Heart left ventricle (tissue), 16 donors: ENCODE measurements at regions of chr22 and their contacts with region 1.

Region 1: DNA sequence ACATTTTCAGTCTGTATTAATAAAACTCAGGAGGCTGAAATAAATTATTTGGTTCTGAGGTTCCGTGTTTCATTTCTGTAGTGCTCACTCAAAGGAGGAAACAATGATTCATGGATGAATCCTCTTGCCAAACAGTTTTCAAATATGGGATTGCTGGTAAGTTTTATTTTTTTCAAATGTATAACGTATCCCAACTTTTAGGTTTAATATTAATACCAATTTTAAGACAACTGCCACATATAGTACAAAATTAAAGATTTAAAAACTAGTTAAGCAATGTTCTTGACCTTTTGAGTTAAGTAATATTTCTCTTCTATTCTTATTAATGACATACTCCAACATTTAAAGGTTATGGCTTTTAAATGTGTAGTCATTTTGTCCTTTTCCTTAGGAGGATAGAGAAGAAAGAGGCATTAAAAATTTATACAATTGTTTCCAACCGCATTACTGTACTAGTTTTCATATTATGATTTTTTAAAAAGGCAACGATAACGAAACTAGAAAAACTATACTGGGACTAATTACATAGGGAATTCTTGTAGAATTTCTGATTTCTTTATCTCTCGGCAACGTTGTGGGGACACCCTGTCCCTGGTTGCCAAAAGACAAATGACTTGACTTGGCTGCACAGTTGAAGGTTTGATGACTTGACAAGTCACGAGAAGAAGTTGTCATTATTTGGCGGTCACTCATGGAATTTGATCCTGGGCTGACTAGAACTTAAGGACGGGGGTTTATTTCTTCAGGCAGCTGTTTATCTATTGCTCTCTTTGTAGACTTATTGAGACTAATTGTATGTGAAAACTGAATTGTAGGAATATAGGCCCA is 69.1 kb upstream of the ADSL start:
- DNase-seq: peak in 2 of 5 donors; percentile 31 to 45
- ATAC-seq: peak; percentile 60 to 76 (median 69)
- H3K4me3 ChIP-seq: peak overlapping the region in 11 of 12 donors; percentile 3 to 51 (median 43)
- H3K27ac ChIP-seq: peak overlapping the region; percentile 58 to 87 (median 80)
- H3K4me1 ChIP-seq: peaks cover 0 to 47% (median 15%) of the 10 kb centered on the region in 12 donors
- H3K27me3 ChIP-seq: no peaks in the 10 kb centered on the region
- CTCF ChIP-seq: no peak
- POLR2A ChIP-seq: no peak

Region 2: DNA sequence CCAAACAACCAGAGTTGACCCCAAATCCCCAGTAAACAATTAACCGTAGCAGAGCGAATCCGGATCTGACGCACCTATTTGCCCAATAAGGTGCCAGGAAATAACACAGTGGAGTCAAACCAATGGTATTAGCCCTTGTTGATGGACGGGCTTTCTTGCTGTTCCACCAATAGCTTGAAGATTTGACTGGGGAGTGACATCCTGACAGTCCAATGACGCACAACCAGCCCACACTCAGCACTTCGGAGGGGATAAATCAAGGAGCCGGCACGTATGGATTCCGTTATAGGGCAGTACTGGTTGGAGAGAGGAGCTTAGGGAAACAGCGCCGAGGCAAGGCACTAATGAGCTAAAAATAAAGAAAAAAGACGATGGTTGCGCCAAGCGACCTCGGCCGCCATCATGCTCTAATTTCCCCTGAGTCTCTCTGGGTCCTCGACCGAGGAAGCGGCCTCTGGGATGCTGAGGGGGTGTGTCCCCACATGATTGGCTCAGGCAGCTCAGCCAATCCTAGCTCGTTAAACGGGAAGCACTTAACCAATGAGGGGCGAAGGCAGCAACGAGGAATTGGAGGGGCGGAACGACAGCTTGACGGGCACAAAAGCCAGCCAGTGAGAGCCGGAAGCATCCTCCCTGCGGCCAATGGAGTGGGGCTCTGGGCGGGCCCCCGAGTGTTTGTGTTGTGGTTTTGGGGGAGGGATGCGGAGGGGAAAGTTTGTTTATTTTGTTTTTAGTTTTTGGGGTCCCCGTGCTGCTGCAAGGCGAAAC is 232.9 kb before region 1 on chr22:
- intact Hi-C with region 1: loop called in 4 of 10 experiments (anchors 5 to 10 kb)
- DNase-seq: peak; percentile 97 to 98 (median 98)
- ATAC-seq: peak; percentile 96 to 98 (median 96)
- H3K4me3 ChIP-seq: peak overlapping the region; percentile 36 to 97 (median 82)
- H3K27ac ChIP-seq: peak overlapping the region; percentile 86 to 98 (median 93)
- H3K4me1 ChIP-seq: peaks cover 3 to 48% (median 26%) of the 10 kb centered on the region in 12 donors
- H3K27me3 ChIP-seq: no peaks in the 10 kb centered on the region
- CTCF ChIP-seq: no peak
- POLR2A ChIP-seq: peak; percentile 48 to 61

Region 3: GRCh38 chr22:40177738-40178416 is 99.3 kb before region 1 on chr22 and contains the start of gene TNRC6B:
- intact Hi-C with region 1: loop called in 7 of 10 experiments (anchors 5 to 10 kb)
- DNase-seq: peak in 4 of 5 donors; percentile 69 to 89 (median 82)
- ATAC-seq: peak; percentile 97 to 98 (median 98)
- H3K4me3 ChIP-seq: peak within 1 kb of the TSS; percentile 57 to 88 (median 70)
- H3K27ac ChIP-seq: peak within 1 kb of the TSS; percentile 67 to 96 (median 82)
- H3K4me1 ChIP-seq: peaks cover 11 to 66% (median 56%) of the 10 kb centered on the region in 12 donors
- H3K27me3 ChIP-seq: no peaks in the 10 kb centered on the region
- CTCF ChIP-seq: no peak
- POLR2A ChIP-seq: peak; percentile 85 to 95
- total RNA-seq, gene TNRC6B: 32.7 to 62.4 (median 41.1) TPM

Region 4: GRCh38 chr22:40183029-40183581 is 94.1 kb before region 1 on chr22:
- intact Hi-C with region 1: loop called in 7 of 10 experiments (anchors 5 to 10 kb)
- DNase-seq: no peak
- ATAC-seq: peak; percentile 6 to 48 (median 38)
- H3K4me3 ChIP-seq: peak overlapping the region in 4 of 12 donors; percentile 2 to 17 (median 13)
- H3K27ac ChIP-seq: peak overlapping the region in 11 of 12 donors; percentile 3 to 68 (median 56)
- H3K4me1 ChIP-seq: peaks cover 6 to 90% (median 68%) of the 10 kb centered on the region in 12 donors
- H3K27me3 ChIP-seq: no peaks in the 10 kb centered on the region
- CTCF ChIP-seq: no peak
- POLR2A ChIP-seq: no peak

Region 5: DNA sequence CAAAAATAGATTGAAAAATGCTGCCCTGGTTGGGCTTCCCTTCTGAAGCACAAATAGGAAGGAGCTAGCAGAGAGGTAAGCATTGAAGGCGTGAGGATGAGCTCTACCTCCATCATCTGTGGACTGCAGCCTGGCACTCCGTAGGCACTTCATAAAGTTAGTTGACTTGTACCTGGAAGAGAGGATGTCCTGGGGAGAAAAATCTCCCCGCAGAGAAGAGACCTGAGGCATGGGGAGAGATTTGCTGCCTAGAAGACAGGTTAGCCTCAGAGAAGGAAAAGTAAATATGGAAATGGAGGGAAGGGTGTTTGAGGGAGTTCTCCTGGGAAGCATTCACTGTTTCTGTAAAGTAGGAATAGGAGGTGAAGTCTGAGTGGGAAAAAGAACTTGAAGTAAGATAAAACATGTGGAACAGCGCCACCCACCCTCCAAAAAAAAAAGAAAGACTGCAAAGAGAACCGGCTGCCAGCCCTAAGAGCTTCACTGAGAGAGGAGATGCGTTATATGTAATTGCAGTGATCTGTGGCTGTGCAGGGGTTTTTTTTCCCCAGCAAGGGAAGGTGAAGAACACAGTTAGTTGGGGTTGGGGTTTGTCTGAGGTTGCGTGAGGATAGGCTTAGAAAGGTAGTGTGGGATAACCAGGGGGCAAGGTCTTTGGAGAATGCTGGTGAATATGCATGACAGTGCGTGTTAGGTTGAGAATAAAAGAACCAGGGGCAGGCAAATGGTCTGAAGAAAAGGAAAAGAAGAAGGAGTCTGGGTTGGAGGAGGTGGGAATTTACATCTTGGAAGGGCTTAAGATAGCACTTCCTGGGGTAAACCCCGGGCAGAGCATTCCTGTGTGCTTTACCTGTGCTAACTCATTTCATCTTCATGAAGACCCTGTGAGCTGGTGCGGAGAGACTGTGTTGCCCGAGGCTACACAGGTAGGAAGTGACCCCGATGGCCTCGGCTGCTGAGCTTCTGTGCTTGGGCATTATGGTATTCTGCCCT is 83.5 kb before region 1 on chr22:
- intact Hi-C with region 1: loop called in 2 of 10 experiments (anchors 5 to 10 kb)
- DNase-seq: no peak
- ATAC-seq: peak in 1 of 4 donors; percentile 31
- H3K4me3 ChIP-seq: no peak overlapping the region
- H3K27ac ChIP-seq: peak overlapping the region in 1 of 12 donors; percentile 53
- H3K4me1 ChIP-seq: peaks cover 0 to 89% (median 68%) of the 10 kb centered on the region in 12 donors
- H3K27me3 ChIP-seq: no peaks in the 10 kb centered on the region
- CTCF ChIP-seq: peak in 10 of 12 donors; percentile 7 to 48 (median 29)
- POLR2A ChIP-seq: no peak

Region 6: GRCh38 chr22:40210818-40211217 is 66.4 kb before region 1 on chr22:
- intact Hi-C with region 1: loop called in 2 of 10 experiments (anchors 10 kb)
- DNase-seq: no peak
- ATAC-seq: no peak
- H3K4me3 ChIP-seq: no peak overlapping the region
- H3K27ac ChIP-seq: peak overlapping the region in 5 of 12 donors; percentile 1 to 84 (median 28)
- H3K4me1 ChIP-seq: peaks cover 2 to 75% (median 60%) of the 10 kb centered on the region in 12 donors
- H3K27me3 ChIP-seq: no peaks in the 10 kb centered on the region
- CTCF ChIP-seq: no peak
- POLR2A ChIP-seq: no peak

Region 7: GRCh38 chr22:40238425-40239344 is 38.5 kb before region 1 on chr22:
- intact Hi-C with region 1: no loop called
- DNase-seq: peak in 1 of 5 donors; percentile 50
- ATAC-seq: peak; percentile 24 to 73 (median 64)
- H3K4me3 ChIP-seq: no peak overlapping the region
- H3K27ac ChIP-seq: peak overlapping the region in 7 of 12 donors; percentile 6 to 62 (median 40)
- H3K4me1 ChIP-seq: peaks cover 6 to 85% (median 60%) of the 10 kb centered on the region in 12 donors
- H3K27me3 ChIP-seq: no peaks in the 10 kb centered on the region
- CTCF ChIP-seq: no peak
- POLR2A ChIP-seq: no peak

Region 8: GRCh38 chr22:40346178-40347118 is 69.2 kb after region 1 on chr22 and contains the start of gene ADSL:
- intact Hi-C with region 1: loop called in 1 of 10 experiments (anchors 5 kb)
- DNase-seq: peak; percentile 90 to 93 (median 93)
- ATAC-seq: peak; percentile 95 to 98 (median 98)
- H3K4me3 ChIP-seq: peak within 1 kb of the TSS; percentile 49 to 85 (median 76)
- H3K27ac ChIP-seq: peak within 1 kb of the TSS; percentile 23 to 92 (median 90)
- H3K4me1 ChIP-seq: peaks cover 0 to 33% (median 16%) of the 10 kb centered on the region in 12 donors
- H3K27me3 ChIP-seq: no peaks in the 10 kb centered on the region
- CTCF ChIP-seq: peak in 3 of 12 donors; percentile 11 to 30 (median 26)
- POLR2A ChIP-seq: peak in 1 of 2 donors; percentile 85
- total RNA-seq, gene ADSL: 46.9 to 87.8 (median 52.0) TPM